ENCODE measurements at regions of chr5 and their contacts with region 1.

Region 1: DNA sequence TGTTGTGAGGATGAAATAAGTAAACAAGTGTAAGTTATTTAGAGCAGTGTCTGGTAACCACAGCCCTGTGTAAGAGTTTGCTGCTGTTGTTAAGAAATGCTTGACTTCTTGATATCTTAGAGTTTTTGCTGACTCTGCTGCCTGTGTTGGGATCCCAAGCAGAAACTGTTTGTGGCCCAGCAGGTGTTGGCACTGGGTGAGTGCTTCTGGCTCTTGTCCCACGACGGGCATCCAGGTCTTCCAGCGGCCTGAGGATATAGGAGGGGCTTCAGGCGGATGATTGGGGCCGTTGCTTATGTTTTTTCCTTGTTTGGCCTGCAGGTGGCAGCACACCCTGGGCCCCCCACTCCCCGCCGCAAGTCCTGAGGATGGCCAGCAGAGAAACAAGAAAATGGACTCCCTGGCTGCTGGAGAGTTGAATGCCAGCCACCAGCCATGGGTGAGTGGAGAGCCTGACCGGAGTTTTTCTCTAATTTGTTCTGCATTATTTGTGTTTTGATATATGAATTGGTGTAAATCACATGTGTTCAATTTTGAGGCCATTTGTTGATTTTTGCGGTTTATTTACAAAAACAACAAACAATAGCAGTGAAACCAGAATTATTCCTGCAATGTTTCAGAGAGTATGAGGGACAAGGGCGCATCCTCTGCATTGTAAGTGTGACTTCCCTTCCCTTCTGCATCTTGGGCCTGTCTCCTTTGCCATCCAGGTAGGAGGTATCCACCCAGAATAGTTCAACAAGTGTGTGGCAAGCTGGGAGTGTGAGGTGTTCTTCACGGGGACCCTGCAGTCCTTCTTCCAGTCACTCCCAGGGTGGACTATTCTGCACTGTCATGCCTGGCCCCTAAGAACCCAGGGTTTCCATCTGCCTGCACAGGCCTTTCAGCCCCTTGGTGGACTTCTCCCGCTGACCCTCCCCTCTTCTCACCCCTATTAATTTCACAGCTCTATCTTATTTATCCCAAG is 50.3 kb downstream of the SLC22A5 start:
- DNase-seq: peak; percentile 79
- ATAC-seq: peak; percentile 75
- H3K4me3 Mint-ChIP-seq: peak overlapping the region; percentile 55
- H3K27ac Mint-ChIP-seq: peak overlapping the region; percentile 98
- H3K4me1 Mint-ChIP-seq: peaks cover 96% of the 10 kb centered on the region
- H3K27me3 Mint-ChIP-seq: no peaks in the 10 kb centered on the region

Region 2: GRCh38 chr5:132466433-132467286 is 46.9 kb after region 1 on chr5:
- CTCF ChIA-PET with region 1: interaction called, 103 read pairs
- DNase-seq: peak; percentile 93
- ATAC-seq: peak; percentile 77
- H3K4me3 Mint-ChIP-seq: peak overlapping the region; percentile 59
- H3K27ac Mint-ChIP-seq: peak overlapping the region; percentile 86
- H3K4me1 Mint-ChIP-seq: peaks cover 98% of the 10 kb centered on the region
- H3K27me3 Mint-ChIP-seq: no peaks in the 10 kb centered on the region

Region 3: DNA sequence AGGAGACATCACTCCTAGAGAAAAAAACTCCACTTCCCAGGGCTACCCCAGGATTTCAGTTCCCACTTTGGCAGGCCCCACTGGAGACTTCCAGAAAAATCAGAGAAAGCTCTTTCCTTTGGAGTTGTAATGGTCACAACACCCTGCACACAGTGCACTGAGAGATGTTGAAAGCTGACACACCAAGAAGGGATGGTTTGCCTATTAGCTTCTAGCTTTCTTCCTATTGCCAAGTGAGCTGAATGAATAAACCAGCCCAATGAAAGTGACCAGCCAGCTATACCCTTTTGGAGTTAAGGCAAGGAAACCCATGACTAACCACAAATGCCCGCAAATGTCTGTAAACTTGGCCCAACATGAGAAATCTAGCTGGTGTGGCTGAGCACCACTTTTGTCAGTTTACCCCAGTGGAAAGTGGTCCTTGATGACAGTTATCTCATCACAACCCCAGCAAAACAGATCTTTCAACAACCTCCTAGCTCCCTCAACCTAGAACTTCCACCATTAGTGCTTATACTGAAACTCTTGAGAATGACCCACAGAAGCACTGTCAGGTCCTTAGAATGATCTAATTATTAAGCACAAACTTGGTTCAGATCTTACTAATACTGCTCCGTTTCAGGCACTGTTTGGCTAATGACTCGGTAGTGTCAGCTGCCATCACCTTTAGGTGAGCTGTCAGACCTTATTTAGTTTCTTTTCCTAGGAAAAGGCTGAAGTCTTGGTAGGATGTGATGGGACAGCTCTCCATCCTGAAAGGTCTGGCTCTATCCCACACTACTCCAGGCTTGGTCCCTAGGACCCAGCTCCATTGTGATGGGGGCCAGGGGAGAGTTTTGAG is 59.5 kb after region 1 on chr5:
- CTCF ChIA-PET with region 1: interaction called, 68 read pairs
- DNase-seq: no peak
- ATAC-seq: no peak
- H3K4me3 Mint-ChIP-seq: no peak overlapping the region
- H3K27ac Mint-ChIP-seq: peak overlapping the region; percentile 72
- H3K4me1 Mint-ChIP-seq: peaks cover 80% of the 10 kb centered on the region
- H3K27me3 Mint-ChIP-seq: no peaks in the 10 kb centered on the region

Region 4: DNA sequence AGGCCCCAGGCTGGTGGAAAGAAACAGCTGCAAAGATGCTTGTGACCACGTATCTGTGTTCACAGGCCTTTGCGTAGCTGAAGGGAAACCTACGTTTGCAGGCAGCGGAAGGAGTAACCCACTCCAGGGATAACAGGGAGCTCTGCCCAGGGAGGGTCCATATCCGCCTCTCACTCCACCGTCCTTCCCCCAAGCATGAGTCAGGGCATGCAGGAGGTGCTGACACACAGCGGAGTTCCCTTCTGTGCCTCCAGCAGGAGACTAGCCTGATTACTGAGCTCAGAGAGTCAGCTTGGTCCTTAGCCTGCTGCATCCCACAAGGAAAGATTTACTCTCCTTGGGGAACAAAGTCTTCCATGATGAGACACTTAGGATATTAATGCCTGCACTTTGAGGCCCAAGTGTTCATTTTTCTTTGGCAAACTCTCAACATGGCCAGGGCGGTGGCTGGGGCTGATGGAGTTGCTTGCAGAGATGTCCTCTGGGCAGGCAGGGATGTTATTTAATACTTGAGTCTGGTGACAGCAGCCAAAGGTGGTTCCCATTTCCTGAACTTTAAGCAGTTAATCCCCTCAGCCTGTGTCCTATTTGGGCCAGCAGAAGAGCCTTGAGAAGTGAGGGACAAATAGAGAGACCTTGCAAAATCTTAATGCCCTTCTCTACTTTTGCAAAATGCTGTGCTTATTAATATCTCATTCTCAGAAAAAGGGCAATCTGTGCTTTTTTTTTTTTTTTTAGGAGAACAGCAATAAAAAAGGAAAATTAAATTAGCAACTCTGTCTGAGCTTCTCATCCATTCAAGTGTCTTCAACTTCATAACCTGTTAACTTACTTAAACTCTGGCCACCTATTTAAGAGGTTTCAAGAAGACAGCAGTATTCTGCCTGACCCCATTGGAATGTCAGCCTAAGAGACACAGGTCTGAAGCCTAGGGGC is 854.1 kb after region 1 on chr5:
- CTCF ChIA-PET with region 1: no interaction called
- DNase-seq: no peak
- ATAC-seq: no peak
- H3K4me3 Mint-ChIP-seq: no peak overlapping the region
- H3K27ac Mint-ChIP-seq: no peak overlapping the region
- H3K4me1 Mint-ChIP-seq: no peaks in the 10 kb centered on the region
- H3K27me3 Mint-ChIP-seq: peaks cover 2% of the 10 kb centered on the region